Panc1 (cell line): ENCODE measurements at regions of chr11 and their contacts with region 1.

Region 1: DNA sequence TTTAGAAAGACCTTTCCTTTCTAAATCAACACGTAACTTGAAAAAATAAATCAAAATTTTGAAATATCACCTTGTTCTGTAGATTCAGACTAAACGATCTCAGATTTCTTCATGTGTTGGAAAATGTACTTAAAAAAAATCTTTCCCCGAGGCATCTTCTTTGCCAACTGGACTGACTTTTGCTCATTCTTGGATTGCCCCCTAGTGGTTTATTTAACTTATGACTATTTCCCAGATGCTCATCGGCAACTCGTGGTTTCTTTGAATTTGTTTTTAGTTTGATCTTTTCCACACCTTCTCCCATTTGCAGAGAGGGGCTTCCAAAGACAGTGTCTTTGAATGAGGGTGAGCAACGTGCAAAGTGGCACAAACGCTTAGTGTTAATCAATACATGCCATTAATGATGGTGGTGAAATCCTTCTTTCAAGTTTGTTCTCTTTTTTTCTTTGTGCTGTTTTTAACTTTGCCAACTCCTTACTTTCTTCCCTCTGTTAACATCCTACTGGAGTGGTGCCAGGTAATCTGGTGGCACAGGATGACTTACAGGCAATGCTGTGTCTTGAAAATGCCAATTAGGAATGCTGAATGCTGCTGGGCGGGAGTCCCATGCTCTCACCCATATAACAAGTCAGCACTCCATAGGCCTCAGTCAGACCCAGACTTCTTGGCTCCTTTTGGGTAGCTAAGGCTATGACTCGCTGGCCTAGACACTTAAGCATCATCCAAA is 18.3 kb downstream of the PRSS23 start:
- DNase-seq: no peak
- ATAC-seq: peak; percentile 51
- H3K4me3 ChIP-seq: no peak overlapping the region
- H3K27ac ChIP-seq: peak overlapping the region; percentile 86
- H3K4me1 ChIP-seq: peaks cover 60% of the 10 kb centered on the region
- H3K27me3 ChIP-seq: no peaks in the 10 kb centered on the region
- CTCF ChIP-seq: peak; percentile 83

Region 2: GRCh38 chr11:85977751-85978160 is 840.9 kb before region 1 on chr11:
- CTCF ChIA-PET with region 1: no interaction called
- POLR2A ChIA-PET with region 1: no interaction called
- in situ Hi-C with region 1: no loop called
- intact Hi-C with region 1: no loop called
- DNase-seq: no peak
- ATAC-seq: no peak
- H3K4me3 ChIP-seq: no peak overlapping the region
- H3K27ac ChIP-seq: no peak overlapping the region
- H3K4me1 ChIP-seq: no peaks in the 10 kb centered on the region
- H3K27me3 ChIP-seq: no peaks in the 10 kb centered on the region
- CTCF ChIP-seq: no peak

Region 3: DNA sequence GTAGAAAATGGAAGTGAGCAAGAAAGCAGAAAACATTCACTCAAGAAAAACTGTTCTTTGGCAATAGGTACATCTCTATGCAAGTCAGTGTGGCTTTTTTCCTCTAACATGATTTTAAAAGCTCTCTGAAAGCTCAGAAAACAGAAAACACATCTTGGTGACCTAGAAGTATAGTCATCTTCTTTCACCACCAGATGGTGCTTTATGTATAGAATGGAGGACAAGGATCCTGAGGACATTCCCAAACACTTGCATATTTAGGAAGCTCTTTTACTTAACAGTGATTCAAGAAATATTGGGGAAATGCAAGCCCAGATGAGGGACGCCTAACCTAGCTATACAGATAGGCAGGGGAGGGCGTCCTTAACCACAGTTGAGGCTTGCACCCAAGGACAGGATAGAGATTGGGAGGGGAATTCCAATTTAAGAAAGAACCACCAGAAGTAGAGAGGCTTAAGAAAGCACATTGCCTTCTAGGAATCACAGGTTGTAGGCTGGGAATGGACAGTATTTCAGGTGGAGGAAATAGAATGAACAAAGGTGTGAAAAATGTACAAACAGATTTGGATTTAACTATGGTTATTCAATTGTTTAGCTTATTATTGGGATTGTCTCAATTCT is 457.7 kb before region 1 on chr11:
- CTCF ChIA-PET with region 1: interaction called, 3 read pairs
- POLR2A ChIA-PET with region 1: no interaction called
- in situ Hi-C with region 1: no loop called
- intact Hi-C with region 1: loop called (anchors 5 kb)
- DNase-seq: peak; percentile 18
- ATAC-seq: peak; percentile 95
- H3K4me3 ChIP-seq: no peak overlapping the region
- H3K27ac ChIP-seq: no peak overlapping the region
- H3K4me1 ChIP-seq: no peaks in the 10 kb centered on the region
- H3K27me3 ChIP-seq: no peaks in the 10 kb centered on the region
- CTCF ChIP-seq: peak; percentile 79

Region 4: DNA sequence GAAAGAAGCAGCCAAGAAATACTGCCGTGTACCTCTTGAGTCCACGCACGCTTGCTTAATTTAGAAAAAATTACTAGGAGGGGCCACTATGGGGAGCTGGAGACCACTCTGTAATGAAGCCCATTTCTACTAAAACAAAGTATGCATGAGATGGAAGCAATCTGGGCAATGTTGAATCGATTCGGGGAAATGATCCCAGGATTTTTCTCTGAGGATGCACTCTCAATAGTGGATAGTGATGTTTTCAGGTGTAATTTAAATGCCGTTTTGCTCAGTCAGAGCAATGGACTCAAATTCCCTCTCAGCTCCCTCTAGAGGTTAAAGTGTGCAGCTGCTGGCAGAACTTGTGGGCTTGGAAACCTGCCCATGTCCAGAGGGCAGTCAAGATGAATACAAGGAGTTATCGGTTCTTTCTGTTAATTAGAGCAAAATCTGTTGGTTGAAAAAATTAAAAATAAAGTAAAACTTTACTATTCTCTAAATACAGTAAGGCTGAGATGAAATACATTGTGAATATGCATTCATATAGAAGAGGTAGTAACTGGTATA is 210.3 kb before region 1 on chr11:
- CTCF ChIA-PET with region 1: no interaction called
- POLR2A ChIA-PET with region 1: no interaction called
- in situ Hi-C with region 1: no loop called
- intact Hi-C with region 1: loop called (anchors 5 kb)
- DNase-seq: no peak
- ATAC-seq: peak; percentile 75
- H3K4me3 ChIP-seq: peak overlapping the region in 1 of 2 experiments; percentile 21; a peak in 2 of 4 replicates
- H3K27ac ChIP-seq: peak overlapping the region; percentile 78
- H3K4me1 ChIP-seq: peaks cover 52% of the 10 kb centered on the region
- H3K27me3 ChIP-seq: no peaks in the 10 kb centered on the region
- CTCF ChIP-seq: peak; percentile 100

Region 5: GRCh38 chr11:86671682-86672621 is 146.7 kb before region 1 on chr11 and contains the start of gene ME3:
- CTCF ChIA-PET with region 1: no interaction called
- POLR2A ChIA-PET with region 1: no interaction called
- in situ Hi-C with region 1: no loop called
- intact Hi-C with region 1: loop called (anchors 5 kb)
- DNase-seq: no peak
- ATAC-seq: peak; percentile 86
- H3K4me3 ChIP-seq: peak within 1 kb of the TSS; percentile 67 to 77
- H3K27ac ChIP-seq: peak within 1 kb of the TSS; percentile 99
- H3K4me1 ChIP-seq: peaks cover 70% of the 10 kb centered on the region
- H3K27me3 ChIP-seq: no peaks in the 10 kb centered on the region
- CTCF ChIP-seq: peak; percentile 40
- total RNA-seq, gene ME3: 35.3 TPM